Pancreas (tissue), 10 donors: ENCODE measurements at regions of chr14 and their contacts with region 1.

Region 1: DNA sequence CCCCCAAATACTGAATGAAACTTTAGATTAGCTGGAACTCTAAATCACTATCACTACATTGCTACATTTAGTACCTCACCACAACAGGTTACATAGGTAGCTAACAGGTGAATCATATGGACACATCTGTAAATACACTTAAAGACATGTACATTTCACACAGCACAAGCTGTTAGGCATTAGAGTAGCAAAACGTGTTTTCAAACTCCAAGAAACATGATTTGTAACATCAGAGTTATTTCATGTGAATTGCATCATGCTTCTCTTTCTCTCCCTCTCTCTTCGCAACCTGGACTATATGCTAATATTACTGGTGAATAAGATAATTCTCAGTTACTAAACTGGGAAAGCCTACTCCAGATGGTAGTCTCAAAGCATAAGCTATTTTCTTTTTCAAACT is 4.3 kb downstream of the SEL1L start:
- DNase-seq: no peak
- ATAC-seq: no peak
- H3K4me3 ChIP-seq: peak overlapping the region; percentile 1 to 95 (median 87)
- H3K27ac ChIP-seq: peak overlapping the region in 2 of 4 donors; percentile 66 to 74
- H3K4me1 ChIP-seq: peaks cover 6 to 16% (median 15%) of the 10 kb centered on the region in 3 donors
- H3K27me3 ChIP-seq: no peaks in the 10 kb centered on the region
- CTCF ChIP-seq: no peak

Region 2: DNA sequence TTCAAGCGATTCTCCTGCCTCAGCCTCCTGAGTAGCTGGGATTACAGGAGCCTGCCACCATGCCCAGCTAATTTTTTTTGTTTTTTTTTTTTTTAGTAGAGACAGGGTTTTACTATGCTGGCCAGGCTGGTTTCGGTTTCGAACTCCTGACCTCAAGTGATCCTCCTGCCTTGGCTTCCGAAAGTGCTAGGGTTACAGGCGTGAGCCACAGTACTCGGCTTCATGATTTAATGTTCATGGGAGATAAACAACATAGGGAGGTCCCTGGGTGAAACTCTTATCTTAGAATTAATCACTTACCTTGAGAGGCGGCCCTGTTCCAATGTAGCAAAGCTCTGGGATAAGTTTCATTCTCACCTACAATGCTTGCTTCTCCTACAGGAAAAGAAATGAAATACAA is 44.0 kb before region 1 on chr14:
- intact Hi-C with region 1: loop called in 2 of 3 experiments (anchors 5 kb)
- DNase-seq: no peak
- ATAC-seq: peak; percentile 13 to 63 (median 42)
- H3K4me3 ChIP-seq: no peak overlapping the region
- H3K27ac ChIP-seq: peak overlapping the region in 3 of 4 donors; percentile 3 to 69 (median 47)
- H3K4me1 ChIP-seq: peaks cover 14 to 29% (median 20%) of the 10 kb centered on the region in 3 donors
- H3K27me3 ChIP-seq: no peaks in the 10 kb centered on the region
- CTCF ChIP-seq: no peak

Region 3: DNA sequence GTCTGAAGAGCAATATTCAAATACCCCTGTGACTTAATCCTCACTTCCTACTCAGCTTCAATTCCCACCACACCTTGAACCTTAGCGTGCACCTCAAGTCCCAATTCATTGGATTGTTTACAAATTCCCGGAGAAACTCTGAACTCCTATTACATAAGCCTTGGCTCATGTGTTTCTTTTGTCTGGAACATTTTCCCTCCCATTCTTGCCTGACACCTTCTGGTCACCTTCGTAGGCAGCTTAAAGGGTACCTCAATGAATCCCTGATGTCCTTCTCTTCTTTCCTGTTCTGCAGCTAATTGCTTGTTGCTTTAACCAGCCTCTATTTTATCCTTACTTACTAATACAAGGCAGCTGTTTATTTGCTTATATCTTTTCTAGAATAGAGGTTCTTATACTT is 89.3 kb after region 1 on chr14:
- intact Hi-C with region 1: no loop called
- DNase-seq: peak in 3 of 6 donors; percentile 15 to 37 (median 30)
- ATAC-seq: peak; percentile 88 to 99 (median 94)
- H3K4me3 ChIP-seq: no peak overlapping the region
- H3K27ac ChIP-seq: no peak overlapping the region
- H3K4me1 ChIP-seq: no peaks in the 10 kb centered on the region
- H3K27me3 ChIP-seq: no peaks in the 10 kb centered on the region
- CTCF ChIP-seq: peak in 2 of 4 donors; percentile 14 to 20